AG04450 (cell line): ENCODE measurements at regions of chr3 and their contacts with region 1.

Region 1: DNA sequence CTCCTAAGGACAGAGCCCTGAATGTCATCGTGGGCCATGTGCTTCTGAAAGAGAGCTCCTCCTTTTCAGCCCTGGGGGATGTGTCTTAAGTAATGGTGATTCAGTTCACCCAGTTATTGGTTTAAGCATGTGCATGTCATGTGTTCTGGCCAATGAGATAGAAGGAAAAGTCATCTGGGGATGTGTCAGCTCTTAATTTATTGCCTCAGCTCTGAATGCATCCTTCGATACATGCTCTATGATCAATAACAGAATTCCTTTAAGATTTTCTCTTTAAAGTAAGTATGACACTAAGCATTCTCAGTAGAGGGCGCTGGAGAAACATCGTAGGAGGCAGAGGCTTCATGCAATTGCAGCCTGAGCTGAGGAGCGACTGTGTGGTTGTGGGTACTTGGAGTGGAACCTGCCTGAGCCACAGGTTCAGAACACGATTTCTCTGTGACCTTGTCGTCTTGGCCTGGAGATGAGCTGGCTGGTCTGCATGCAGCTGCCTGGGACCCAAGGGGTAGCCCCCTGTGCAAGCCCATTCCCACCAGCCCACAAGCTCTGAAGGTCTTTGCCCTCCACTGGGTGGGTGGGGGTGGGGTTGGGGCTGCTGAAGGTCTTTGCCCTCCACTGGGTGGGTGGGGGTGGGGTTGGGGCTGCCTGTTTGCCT is 69.5 kb downstream of the C3orf38 start:
- DNase-seq: peak; percentile 2
- H3K4me3 ChIP-seq: no peak overlapping the region
- H3K27ac ChIP-seq: no peak overlapping the region
- H3K27me3 ChIP-seq: no peaks in the 10 kb centered on the region
- CTCF ChIP-seq: peak; percentile 57

Region 2: GRCh38 chr3:88038566-88038965 is 180.7 kb before region 1 on chr3:
- CTCF ChIA-PET with region 1: no interaction called
- POLR2A ChIA-PET with region 1: no interaction called
- DNase-seq: no peak
- H3K4me3 ChIP-seq: no peak overlapping the region
- H3K27ac ChIP-seq: no peak overlapping the region
- H3K27me3 ChIP-seq: no peaks in the 10 kb centered on the region
- CTCF ChIP-seq: no peak

Region 3: GRCh38 chr3:88195951-88196434 is 23.3 kb before region 1 on chr3:
- CTCF ChIA-PET with region 1: interaction called, 11 read pairs
- POLR2A ChIA-PET with region 1: no interaction called
- DNase-seq: peak; percentile 4
- H3K4me3 ChIP-seq: no peak overlapping the region
- H3K27ac ChIP-seq: no peak overlapping the region
- H3K27me3 ChIP-seq: no peaks in the 10 kb centered on the region
- CTCF ChIP-seq: no peak

Region 4: DNA sequence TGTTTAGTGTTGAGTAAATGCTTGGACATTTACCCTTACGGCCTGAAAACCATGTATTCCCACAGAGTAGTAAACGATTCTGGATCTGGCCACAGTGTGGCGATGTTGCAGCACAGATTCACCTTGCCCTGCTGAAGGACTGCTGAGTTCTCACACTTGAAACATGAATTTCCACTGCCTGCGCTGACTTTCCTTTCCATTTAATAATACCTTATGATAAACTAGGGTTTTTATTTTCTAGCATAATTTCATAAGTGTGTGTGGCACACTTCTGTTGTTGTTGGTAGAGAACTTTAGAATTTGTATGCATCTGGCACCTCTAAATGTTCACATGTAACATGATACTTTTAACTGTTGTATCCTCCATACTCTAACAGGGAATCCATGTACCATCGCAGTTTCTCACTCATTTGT is 15.6 kb before region 1 on chr3:
- CTCF ChIA-PET with region 1: interaction called, 20 read pairs
- POLR2A ChIA-PET with region 1: no interaction called
- DNase-seq: peak; percentile 32
- H3K4me3 ChIP-seq: no peak overlapping the region
- H3K27ac ChIP-seq: no peak overlapping the region
- H3K27me3 ChIP-seq: no peaks in the 10 kb centered on the region
- CTCF ChIP-seq: peak; percentile 94

Region 5: GRCh38 chr3:88882121-88882520 is 662.9 kb after region 1 on chr3:
- CTCF ChIA-PET with region 1: no interaction called
- POLR2A ChIA-PET with region 1: no interaction called
- DNase-seq: no peak
- H3K4me3 ChIP-seq: no peak overlapping the region
- H3K27ac ChIP-seq: no peak overlapping the region
- H3K27me3 ChIP-seq: no peaks in the 10 kb centered on the region
- CTCF ChIP-seq: no peak

Region 6: DNA sequence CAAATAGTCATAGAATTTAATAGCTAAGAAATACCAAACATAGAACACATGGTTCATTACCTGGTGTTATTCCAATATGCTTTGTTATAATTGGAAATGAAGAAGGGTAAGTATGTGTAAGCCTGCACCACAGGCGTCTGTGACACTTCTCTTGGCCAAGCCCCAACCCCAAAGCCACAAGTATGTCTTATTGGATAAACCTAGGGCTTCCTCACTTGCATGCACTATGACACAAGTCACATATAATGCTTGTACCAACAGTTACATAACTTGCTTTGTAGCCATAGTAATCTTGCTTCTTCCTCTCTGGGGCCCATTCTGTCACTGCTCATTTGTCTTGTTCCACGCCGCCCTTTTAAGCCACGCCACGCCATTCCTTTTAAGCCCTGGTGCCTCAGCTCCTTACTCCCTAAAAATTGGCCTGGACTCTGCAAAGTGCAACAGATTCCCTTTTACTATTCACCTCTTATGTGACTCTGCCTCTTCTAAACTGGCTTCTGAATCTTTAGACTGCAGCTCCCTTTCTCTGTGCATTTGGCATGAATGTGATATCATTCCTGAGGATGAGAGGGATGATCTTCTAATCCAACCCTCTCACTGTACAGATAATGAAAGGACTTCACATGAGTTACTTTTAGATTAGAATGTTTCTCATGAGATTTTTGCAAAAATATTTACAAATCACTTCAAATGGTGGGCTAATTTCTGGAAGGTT is 840.1 kb after region 1 on chr3:
- CTCF ChIA-PET with region 1: no interaction called
- POLR2A ChIA-PET with region 1: no interaction called
- DNase-seq: no peak
- H3K4me3 ChIP-seq: no peak overlapping the region
- H3K27ac ChIP-seq: no peak overlapping the region
- H3K27me3 ChIP-seq: no peaks in the 10 kb centered on the region
- CTCF ChIP-seq: no peak